Panc1 (cell line): ENCODE measurements at regions of chr19 and their contacts with region 1.

Region 1: DNA sequence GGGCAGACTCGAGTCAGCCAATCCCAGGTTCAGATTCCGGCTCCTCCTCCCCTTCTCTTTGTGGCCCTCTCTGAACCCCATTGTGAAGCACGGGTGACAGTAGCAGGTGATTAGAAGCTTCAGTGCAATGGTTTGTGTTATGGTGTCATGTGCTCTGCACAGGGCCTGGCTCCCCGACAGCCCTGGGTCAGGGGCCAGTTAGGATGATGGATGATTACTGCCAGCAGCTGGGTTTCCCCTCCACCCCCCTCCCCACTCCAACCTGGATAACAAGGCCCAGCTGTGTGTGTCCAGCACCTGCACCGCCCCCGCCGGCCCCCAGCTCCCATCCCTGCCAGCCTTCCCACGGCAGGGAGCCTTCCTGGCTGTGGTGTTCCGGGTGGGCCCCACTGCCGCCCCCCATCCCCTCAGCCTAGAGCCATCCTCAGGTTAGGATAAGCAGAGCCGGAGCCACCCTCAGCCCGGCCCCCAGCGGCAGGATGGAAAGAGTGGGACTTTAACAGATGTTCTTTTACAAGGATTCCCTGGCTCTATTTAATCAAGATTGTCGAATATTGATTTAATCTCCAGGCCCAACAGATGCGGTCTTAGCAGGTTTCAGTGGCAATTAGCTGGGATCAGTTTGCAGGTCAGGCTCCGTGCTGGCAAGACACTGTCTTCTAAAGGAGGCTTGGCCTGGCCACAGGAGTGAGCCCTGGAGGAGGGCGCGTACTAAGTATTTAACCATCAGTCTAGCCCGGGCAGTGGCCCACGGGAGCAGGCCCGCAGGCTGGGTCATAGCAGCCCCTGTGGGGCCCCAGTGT is 156.2 kb downstream of the SIPA1L3 start:
- DNase-seq: no peak
- ATAC-seq: peak; percentile 71
- H3K4me3 ChIP-seq: no peak overlapping the region
- H3K27ac ChIP-seq: peak overlapping the region; percentile 62
- H3K4me1 ChIP-seq: peaks cover 13% of the 10 kb centered on the region
- H3K27me3 ChIP-seq: no peaks in the 10 kb centered on the region
- CTCF ChIP-seq: no peak

Region 2: GRCh38 chr19:37997911-37998344 is 65.2 kb before region 1 on chr19:
- CTCF ChIA-PET with region 1: no interaction called
- POLR2A ChIA-PET with region 1: no interaction called
- in situ Hi-C with region 1: loop called (anchors 5 kb)
- intact Hi-C with region 1: no loop called
- DNase-seq: peak; percentile 90
- ATAC-seq: peak; percentile 78
- H3K4me3 ChIP-seq: no peak overlapping the region
- H3K27ac ChIP-seq: peak overlapping the region; percentile 9; the same call in 1 of the 2 replicates
- H3K4me1 ChIP-seq: peaks cover 8% of the 10 kb centered on the region
- H3K27me3 ChIP-seq: no peaks in the 10 kb centered on the region
- CTCF ChIP-seq: no peak

Region 3: GRCh38 chr19:38089440-38089839 is 26.3 kb after region 1 on chr19:
- CTCF ChIA-PET with region 1: no interaction called
- POLR2A ChIA-PET with region 1: interaction called, 11 read pairs
- in situ Hi-C with region 1: no loop called
- intact Hi-C with region 1: no loop called
- DNase-seq: no peak
- ATAC-seq: no peak
- H3K4me3 ChIP-seq: no peak overlapping the region
- H3K27ac ChIP-seq: no peak overlapping the region
- H3K4me1 ChIP-seq: no peaks in the 10 kb centered on the region
- H3K27me3 ChIP-seq: no peaks in the 10 kb centered on the region
- CTCF ChIP-seq: no peak

Region 4: GRCh38 chr19:38277969-38278680 is 215.0 kb after region 1 on chr19:
- CTCF ChIA-PET with region 1: no interaction called
- POLR2A ChIA-PET with region 1: no interaction called
- in situ Hi-C with region 1: no loop called
- intact Hi-C with region 1: no loop called
- DNase-seq: no peak
- ATAC-seq: peak; percentile 8; the same call in 1 of the 2 replicates
- H3K4me3 ChIP-seq: no peak overlapping the region
- H3K27ac ChIP-seq: peak overlapping the region; percentile 71
- H3K4me1 ChIP-seq: peaks cover 79% of the 10 kb centered on the region
- H3K27me3 ChIP-seq: no peaks in the 10 kb centered on the region
- CTCF ChIP-seq: no peak

Region 5: GRCh38 chr19:38374429-38375176 is 311.4 kb after region 1 on chr19 and contains the start of gene PSMD8:
- CTCF ChIA-PET with region 1: no interaction called
- POLR2A ChIA-PET with region 1: no interaction called
- in situ Hi-C with region 1: no loop called
- intact Hi-C with region 1: no loop called
- DNase-seq: peak; percentile 97
- ATAC-seq: peak; percentile 99
- H3K4me3 ChIP-seq: peak within 1 kb of the TSS; percentile 85 to 87
- H3K27ac ChIP-seq: peak within 1 kb of the TSS; percentile 92
- H3K4me1 ChIP-seq: peaks cover 10% of the 10 kb centered on the region
- H3K27me3 ChIP-seq: no peaks in the 10 kb centered on the region
- CTCF ChIP-seq: no peak
- total RNA-seq, gene PSMD8: 388 TPM